ENCODE measurements at regions of chr12 and their contacts with region 1.

Region 1: DNA sequence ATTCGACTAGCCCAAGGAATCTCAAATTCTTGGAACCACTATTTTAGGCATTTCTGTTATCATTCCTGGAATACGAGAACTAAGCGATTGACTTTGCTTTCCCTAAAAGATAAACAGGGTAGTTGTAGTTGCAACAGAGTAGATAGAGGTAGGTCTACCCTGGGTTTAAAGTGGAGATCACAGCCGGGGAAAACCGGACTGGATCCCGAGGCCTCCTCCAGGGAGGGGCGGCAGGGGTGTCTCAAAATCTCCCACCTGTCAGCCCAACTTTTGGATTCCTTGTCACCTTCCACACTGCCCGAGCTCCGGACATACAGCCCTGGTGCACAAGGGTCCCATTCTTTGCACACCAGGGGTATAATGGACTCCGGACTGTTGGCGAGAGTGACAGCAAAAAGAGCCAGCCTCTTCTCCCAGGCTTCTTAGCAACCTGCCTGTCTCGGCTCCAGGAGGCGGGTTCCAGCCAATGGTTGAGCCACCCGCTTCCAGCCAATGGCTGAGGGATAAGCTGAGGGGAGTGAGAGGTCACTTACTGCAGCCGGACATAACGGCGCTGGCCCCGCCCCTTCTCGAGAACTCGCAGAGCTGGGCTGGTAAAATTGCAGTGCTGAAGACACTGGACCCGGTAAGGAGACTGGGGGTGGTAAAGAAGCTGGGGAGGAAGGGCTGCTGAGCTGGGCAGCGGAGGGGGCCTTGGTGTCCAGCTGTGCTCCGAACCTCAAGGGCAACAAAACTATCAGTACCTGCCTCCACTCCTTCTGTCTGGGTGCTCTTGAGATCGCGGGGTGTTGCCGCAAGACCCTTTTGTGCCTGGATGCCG is at the start of gene SUOX:
- DNase-seq: peak; percentile 61
- H3K4me3 Mint-ChIP-seq: peak within 1 kb of the TSS; percentile 60
- H3K27ac Mint-ChIP-seq: no peak within 1 kb of the TSS
- H3K4me1 Mint-ChIP-seq: peaks cover 19% of the 10 kb centered on the region
- H3K27me3 Mint-ChIP-seq: peaks cover 5% of the 10 kb centered on the region
- total RNA-seq, gene SUOX: 2.4 to 2.7 TPM

Region 2: GRCh38 chr12:55982319-55982936 is 14.5 kb before region 1 on chr12:
- CTCF ChIA-PET with region 1: interaction called, 36 read pairs
- POLR2A ChIA-PET with region 1: interaction called, 3 read pairs
- intact Hi-C with region 1: no loop called
- DNase-seq: no peak
- H3K4me3 Mint-ChIP-seq: no peak overlapping the region
- H3K27ac Mint-ChIP-seq: no peak overlapping the region
- H3K4me1 Mint-ChIP-seq: peaks cover 13% of the 10 kb centered on the region
- H3K27me3 Mint-ChIP-seq: no peaks in the 10 kb centered on the region

Region 3: GRCh38 chr12:56007564-56008559 is 10.9 kb after region 1 on chr12:
- CTCF ChIA-PET with region 1: interaction called, 49 read pairs
- POLR2A ChIA-PET with region 1: interaction called, 5 read pairs
- intact Hi-C with region 1: no loop called
- DNase-seq: peak; percentile 71
- H3K4me3 Mint-ChIP-seq: peak overlapping the region; percentile 79
- H3K27ac Mint-ChIP-seq: peak overlapping the region; percentile 69
- H3K4me1 Mint-ChIP-seq: peaks cover 24% of the 10 kb centered on the region
- H3K27me3 Mint-ChIP-seq: no peaks in the 10 kb centered on the region

Region 4: DNA sequence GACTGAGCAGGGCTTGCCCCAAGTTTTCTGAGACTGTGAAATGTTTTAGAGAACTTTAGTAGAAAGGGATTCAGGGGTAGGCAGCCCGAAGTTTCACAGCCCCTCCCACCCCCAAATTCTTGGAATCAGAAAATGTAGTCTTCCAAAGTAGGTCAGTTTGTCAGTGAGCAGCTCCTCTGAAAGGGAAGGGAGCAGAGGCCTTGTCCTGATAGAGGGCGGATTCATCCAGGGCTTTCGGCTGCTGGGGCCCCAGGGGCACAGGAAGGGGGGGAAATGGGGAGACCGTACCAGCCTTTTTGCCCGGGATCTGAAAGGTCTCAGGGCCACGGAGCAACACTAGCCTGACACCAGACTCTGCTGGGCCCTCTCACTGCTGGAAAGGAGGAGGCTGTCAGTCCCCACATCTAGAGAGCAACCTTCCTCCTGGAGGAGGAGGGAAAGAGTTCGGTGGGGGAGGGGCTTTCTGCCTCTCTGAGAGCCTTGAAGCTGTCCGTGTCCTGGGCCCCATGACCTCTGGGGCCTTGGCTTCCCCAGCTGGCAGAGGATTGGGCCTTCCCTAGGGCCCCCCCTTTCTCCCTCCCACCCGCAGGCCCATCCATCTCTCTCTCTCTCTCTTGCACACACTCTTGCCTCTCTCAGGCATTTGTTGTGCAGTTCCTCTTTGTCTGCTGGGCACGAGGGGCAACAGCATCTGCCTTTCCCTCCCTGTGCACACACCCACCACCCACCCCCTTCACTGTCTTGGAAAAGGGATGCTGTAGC is 23.7 kb after region 1 on chr12 and contains the start of gene IKZF4:
- CTCF ChIA-PET with region 1: interaction called, 35 read pairs
- POLR2A ChIA-PET with region 1: interaction called, 3 read pairs
- intact Hi-C with region 1: no loop called
- DNase-seq: peak; percentile 41
- H3K4me3 Mint-ChIP-seq: peak within 1 kb of the TSS; percentile 83
- H3K27ac Mint-ChIP-seq: peak within 1 kb of the TSS; percentile 80
- H3K4me1 Mint-ChIP-seq: peaks cover 32% of the 10 kb centered on the region
- H3K27me3 Mint-ChIP-seq: no peaks in the 10 kb centered on the region
- total RNA-seq, gene IKZF4: 14.4 to 15.1 TPM

Region 5: DNA sequence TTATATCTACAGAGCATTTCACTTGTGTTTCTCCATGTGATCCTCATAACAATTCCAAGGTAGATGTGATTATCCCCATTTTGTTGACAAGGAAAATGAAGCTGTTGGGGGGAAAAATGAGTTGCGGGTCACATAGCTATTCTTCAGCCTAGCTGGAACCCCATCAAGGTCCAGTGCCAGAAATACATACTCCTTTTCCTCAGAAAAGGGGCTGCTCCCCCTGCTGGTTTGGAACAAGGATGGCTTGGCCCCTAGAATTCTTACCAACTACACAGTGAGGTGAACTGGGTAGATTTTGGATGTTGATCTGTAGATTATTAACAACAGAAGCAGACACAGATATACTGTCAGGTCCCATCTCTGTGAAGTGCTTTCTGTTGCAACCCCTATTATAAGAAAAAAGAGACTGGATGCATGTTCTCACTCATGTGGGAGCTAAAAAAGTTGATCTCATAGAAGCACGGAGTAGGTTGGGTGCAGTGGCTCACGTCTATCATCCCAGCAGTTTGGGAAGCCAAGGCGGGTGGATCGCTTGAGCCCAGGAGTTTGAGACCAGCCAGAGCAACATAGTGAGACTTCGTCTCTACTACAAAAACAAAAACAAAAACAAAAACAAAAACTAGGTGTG is 32.9 kb after region 1 on chr12:
- CTCF ChIA-PET with region 1: interaction called, 102 read pairs
- POLR2A ChIA-PET with region 1: no interaction called
- intact Hi-C with region 1: loop called (anchors 1 kb)
- DNase-seq: peak; percentile 54
- H3K4me3 Mint-ChIP-seq: no peak overlapping the region
- H3K27ac Mint-ChIP-seq: no peak overlapping the region
- H3K4me1 Mint-ChIP-seq: peaks cover 19% of the 10 kb centered on the region
- H3K27me3 Mint-ChIP-seq: no peaks in the 10 kb centered on the region

Measured in activated CD4-positive, alpha-beta memory T cell treated with anti-CD3 and anti-CD28 coated beads for 36 hours (primary cell).